ENCODE measurements at regions of chr16 and their contacts with region 1.

Region 1: DNA sequence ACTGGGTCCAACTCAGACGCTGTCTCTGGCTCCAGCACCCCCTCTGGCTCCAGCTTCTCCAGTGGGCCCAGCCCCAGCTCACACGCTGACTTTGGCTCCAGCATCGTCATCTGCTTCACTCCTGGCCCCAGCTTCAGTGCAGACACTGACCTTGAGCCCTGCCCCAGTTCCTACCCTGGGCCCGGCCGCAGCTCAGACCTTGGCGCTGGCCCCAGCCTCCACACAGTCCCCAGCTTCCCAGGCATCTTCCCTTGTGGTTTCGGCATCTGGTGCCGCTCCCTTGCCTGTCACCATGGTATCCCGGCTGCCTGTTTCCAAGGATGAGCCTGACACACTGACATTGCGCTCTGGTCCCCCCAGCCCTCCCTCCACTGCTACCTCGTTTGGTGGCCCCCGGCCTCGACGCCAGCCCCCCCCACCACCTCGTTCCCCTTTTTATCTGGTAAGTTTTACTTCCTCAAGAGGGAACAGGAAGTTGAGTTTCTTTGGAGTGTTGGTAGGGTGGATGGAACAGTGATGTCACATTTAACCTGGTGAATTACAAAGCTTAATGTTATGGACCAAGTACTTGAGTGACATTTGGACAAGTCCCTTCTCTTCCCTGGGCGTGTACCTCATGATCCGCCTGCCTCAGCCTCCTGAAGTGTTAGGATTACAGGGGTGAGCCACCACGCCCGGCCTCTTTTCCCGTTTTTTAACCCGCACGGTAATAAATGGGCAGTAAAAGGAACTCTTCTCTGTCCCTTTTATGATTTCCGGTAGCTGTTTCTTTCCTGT is 23.4 kb upstream of the PHKG2 start:
- DNase-seq: peak; percentile 75
- H3K4me3 ChIP-seq: no peak overlapping the region
- H3K27ac ChIP-seq: peak overlapping the region; percentile 58
- H3K4me1 ChIP-seq: peaks cover 4% of the 10 kb centered on the region
- H3K27me3 ChIP-seq: no peaks in the 10 kb centered on the region
- CTCF ChIP-seq: no peak

Region 2: GRCh38 chr16:30370444-30371247 is 354.2 kb before region 1 on chr16 and contains the start of gene TBC1D10B:
- intact Hi-C with region 1: no loop called
- DNase-seq: peak; percentile 100
- H3K4me3 ChIP-seq: peak within 1 kb of the TSS; percentile 73
- H3K27ac ChIP-seq: peak within 1 kb of the TSS; percentile 83
- H3K4me1 ChIP-seq: peaks cover 17% of the 10 kb centered on the region
- H3K27me3 ChIP-seq: no peaks in the 10 kb centered on the region
- CTCF ChIP-seq: peak; percentile 14
- total RNA-seq, gene TBC1D10B: 45.0 to 62.3 TPM

Region 3: DNA sequence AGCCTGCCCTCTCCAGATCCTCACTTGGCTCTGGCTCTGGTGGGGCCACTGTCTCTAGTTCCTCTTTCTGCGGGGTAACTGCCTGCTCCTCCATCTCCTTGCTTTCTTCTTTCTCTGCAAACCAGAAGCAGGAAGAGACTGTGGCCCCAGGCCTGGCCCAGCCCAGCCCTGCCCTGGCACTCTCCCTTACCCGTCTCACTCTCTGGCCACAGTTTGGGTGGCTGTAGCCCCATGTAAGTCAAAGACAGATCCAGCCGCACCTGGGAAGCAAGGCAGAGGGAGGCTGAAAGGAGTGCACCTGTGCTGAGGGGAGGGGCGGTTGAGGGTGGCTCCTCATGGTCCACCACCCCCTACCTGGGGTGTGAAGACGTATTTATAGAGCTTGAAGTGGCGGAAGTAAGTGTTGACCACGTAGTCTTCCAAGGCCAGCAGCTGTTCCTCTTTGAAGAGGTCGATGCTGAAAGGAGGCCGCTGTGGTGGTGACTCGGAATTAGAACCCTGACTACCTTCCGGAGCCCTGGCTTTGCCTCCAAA is 34.2 kb after region 1 on chr16:
- intact Hi-C with region 1: loop called (anchors 5 kb)
- DNase-seq: no peak
- H3K4me3 ChIP-seq: no peak overlapping the region
- H3K27ac ChIP-seq: peak overlapping the region; percentile 21
- H3K4me1 ChIP-seq: peaks cover 12% of the 10 kb centered on the region
- H3K27me3 ChIP-seq: no peaks in the 10 kb centered on the region
- CTCF ChIP-seq: no peak

Region 4: GRCh38 chr16:30896889-30897733 is 172.3 kb after region 1 on chr16:
- intact Hi-C with region 1: no loop called
- DNase-seq: peak; percentile 91
- H3K4me3 ChIP-seq: peak overlapping the region; percentile 27
- H3K27ac ChIP-seq: peak overlapping the region; percentile 83
- H3K4me1 ChIP-seq: peaks cover 9% of the 10 kb centered on the region
- H3K27me3 ChIP-seq: no peaks in the 10 kb centered on the region
- CTCF ChIP-seq: no peak

Region 5: DNA sequence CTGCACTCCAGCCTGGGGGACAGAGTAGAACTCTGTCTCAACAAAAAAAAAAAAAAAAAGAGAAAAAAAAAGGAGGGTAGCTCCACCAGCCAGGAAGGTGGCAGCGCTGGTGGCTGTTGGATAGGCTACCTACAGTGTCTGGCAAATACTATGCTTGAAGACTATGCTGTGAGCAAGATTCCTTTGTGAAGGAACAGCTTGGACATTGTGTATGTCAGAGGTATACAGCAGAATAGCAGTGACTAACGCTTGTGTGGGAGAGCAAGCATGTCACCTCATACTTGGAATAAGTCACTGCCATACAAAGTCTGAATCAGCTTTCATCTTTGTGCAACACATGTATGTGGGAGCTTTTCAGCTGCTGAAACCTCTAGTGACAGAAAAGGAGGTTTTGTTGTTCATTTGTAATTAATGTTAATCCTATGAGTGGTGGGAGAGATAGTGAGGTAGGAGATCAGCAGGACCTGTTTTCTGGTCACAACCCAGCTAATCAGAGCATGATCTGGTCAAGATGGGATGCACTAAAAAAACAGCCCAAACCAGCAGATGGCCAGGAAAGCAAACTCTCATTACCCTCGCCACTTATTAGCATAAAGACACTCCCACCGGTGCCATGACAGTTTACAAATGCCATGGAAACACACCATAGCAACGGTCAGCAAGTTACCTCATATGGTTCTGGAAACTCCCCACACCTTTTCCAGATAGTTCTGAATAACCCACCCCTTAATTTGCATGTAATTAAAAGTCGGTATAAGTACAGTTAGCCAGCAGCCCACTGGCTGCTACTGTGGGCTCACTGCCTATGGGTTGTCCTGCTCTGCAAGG is 661.5 kb after region 1 on chr16:
- intact Hi-C with region 1: no loop called
- DNase-seq: no peak
- H3K4me3 ChIP-seq: no peak overlapping the region
- H3K27ac ChIP-seq: no peak overlapping the region
- H3K4me1 ChIP-seq: no peaks in the 10 kb centered on the region
- H3K27me3 ChIP-seq: no peaks in the 10 kb centered on the region
- CTCF ChIP-seq: no peak